T-cell (primary cell): ENCODE measurements at regions of chr16 and their contacts with region 1.

Region 1: GRCh38 chr16:58652461-58653140 is 23.0 kb upstream of the CNOT1 start:
- DNase-seq: no peak
- ATAC-seq: no peak
- H3K4me3 ChIP-seq: no peak overlapping the region
- H3K4me3 Mint-ChIP-seq: no peak overlapping the region
- H3K27ac ChIP-seq: no peak overlapping the region
- H3K27ac Mint-ChIP-seq: no peak overlapping the region
- H3K4me1 ChIP-seq: no peaks in the 10 kb centered on the region
- H3K4me1 Mint-ChIP-seq: no peaks in the 10 kb centered on the region
- H3K27me3 ChIP-seq: peaks cover 0 to 8% of the 10 kb centered on the region in 2 experiments
- H3K27me3 Mint-ChIP-seq: peaks cover 0 to 7% of the 10 kb centered on the region in 2 donors

Region 2: DNA sequence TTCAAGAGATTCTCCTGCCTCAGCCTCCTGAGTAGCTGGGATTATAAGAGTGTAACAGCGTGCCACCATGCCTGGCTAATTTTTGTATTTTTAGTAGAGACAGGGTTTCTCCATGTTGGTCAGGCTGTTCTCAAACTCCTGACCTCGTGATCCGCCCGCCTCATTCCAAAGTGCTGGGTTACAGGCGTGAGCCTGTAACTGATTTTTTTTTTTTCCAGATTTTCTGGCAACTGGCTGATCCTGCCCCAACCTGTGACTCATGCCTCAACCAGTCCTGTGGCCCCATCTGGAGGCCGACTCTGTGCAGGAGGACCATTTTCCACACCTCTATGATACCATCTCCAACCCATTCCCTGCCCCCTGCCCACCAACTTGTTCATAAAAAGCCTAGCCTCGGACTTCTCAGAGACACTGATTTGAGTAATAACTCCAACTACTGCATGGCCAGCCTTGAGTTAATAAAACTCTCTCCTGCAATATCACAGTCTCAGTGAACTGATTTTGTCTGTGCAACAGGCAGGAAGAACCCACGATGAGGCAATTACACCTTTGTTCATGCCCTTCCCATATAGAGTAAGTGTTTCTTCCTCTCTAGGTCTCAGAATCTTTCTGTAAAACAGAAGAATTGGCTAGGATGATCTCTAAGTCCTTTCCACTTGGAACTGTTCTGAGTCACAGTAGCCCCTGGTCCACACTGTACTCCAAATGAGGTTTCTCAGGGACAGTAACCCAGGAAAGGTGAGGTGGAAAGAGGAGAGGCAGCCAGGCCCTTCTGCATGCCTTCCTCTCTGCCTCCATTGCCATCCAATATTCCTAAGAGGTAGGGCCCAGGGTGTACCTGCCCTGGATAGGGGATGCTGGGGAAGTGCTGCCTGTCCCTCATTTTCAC is 14.2 kb before region 1 on chr16:
- CTCF ChIA-PET with region 1: no interaction called
- POLR2A ChIA-PET with region 1: interaction called, 4 to 10 read pairs
- DNase-seq: peak in 1 of 35 experiments; percentile 19
- ATAC-seq: no peak
- H3K4me3 ChIP-seq: no peak overlapping the region
- H3K4me3 Mint-ChIP-seq: no peak overlapping the region
- H3K27ac ChIP-seq: no peak overlapping the region
- H3K27ac Mint-ChIP-seq: no peak overlapping the region
- H3K4me1 ChIP-seq: no peaks in the 10 kb centered on the region
- H3K4me1 Mint-ChIP-seq: no peaks in the 10 kb centered on the region
- H3K27me3 ChIP-seq: no peaks in the 10 kb centered on the region
- H3K27me3 Mint-ChIP-seq: peaks cover 0 to 6% of the 10 kb centered on the region in 2 donors

Region 3: DNA sequence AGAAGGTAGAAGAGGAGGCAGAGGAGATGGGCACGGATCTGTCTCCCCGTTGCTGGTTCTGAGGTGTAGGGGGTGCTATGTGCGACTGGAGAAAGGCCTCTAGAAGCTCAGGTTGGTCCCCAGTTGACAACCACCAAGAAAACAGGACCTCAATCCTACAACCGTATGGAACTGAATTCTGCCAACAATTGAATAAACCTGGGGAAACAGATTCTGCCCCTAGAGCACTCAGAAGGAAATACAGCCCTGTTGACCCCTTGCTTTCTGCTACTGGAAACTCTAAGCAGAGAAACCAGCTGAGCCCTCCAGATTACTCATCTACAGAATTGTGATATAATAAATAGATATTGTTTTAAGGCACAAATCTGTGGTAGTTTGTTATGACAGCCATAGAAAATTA is 394.5 kb after region 1 on chr16:
- CTCF ChIA-PET with region 1: no interaction called
- POLR2A ChIA-PET with region 1: no interaction called
- DNase-seq: no peak
- ATAC-seq: no peak
- H3K4me3 ChIP-seq: no peak overlapping the region
- H3K4me3 Mint-ChIP-seq: no peak overlapping the region
- H3K27ac ChIP-seq: no peak overlapping the region
- H3K27ac Mint-ChIP-seq: no peak overlapping the region
- H3K4me1 ChIP-seq: no peaks in the 10 kb centered on the region
- H3K4me1 Mint-ChIP-seq: no peaks in the 10 kb centered on the region
- H3K27me3 ChIP-seq: no peaks in the 10 kb centered on the region
- H3K27me3 Mint-ChIP-seq: no peaks in the 10 kb centered on the region